HCT116 (cell line): ENCODE measurements at regions of chr1 and their contacts with region 1.

Region 1: DNA sequence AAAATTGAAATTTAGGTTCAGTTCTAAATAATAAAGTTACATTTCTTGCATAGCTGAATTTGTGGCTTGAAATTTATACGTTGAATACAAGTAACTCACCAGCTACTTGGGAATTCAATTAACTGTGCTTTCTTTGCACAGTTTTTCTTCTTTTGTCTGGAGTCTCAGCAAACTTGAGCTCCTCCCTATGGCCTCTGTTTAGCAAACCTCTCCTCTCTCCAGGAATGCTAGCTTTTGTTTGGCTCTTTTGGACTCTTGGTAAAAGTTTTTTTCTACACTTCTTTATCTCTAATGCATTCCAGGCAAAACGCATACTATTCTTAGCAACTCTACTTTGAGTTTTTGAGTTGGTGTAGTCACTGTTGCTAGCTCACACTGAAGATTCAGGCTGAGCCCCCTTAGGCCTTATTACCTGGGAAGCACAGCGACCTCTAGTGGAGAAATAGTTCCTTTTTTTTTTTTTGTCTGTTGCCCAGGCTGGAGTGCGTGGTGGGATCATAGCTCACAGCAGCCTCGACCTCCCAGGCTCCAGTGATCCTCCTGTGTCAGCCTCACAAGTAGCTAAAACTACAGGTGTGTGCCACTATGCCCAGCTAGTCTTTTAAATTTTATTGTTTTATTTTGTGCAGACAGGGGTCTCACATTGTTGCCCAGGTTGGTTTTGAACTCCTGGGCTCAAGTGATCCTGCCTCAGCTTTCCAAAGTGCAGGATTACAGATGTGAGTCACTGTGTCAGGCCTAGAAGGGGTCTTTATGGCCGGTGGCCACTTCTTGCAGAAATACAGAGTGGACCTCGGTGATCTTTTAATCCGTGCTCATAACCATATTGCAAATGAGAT is 61.7 kb downstream of the CASQ2 start:
- DNase-seq: peak; percentile 51
- ATAC-seq: peak; percentile 87
- H3K4me3 ChIP-seq: no peak overlapping the region
- H3K27ac ChIP-seq: no peak overlapping the region
- H3K4me1 ChIP-seq: no peaks in the 10 kb centered on the region
- H3K27me3 ChIP-seq: no peaks in the 10 kb centered on the region; the same call in 1 of the 2 replicates
- CTCF ChIP-seq: peak; percentile 60 to 86 (median 64); a peak in 5 of 6 replicates
- POLR2A ChIP-seq: no peak
- RAD21 ChIP-seq: peak; percentile 65

Region 2: GRCh38 chr1:115609021-115609420 is 97.8 kb before region 1 on chr1:
- CTCF ChIA-PET with region 1: interaction called, 30 read pairs
- POLR2A ChIA-PET with region 1: no interaction called
- RAD21 ChIA-PET with region 1: interaction called, 10 to 12 read pairs
- intact Hi-C with region 1: loop called (anchors 1 kb)
- DNase-seq: no peak
- ATAC-seq: no peak
- H3K4me3 ChIP-seq: no peak overlapping the region
- H3K27ac ChIP-seq: no peak overlapping the region
- H3K4me1 ChIP-seq: no peaks in the 10 kb centered on the region; a peak in 1 of 4 replicates
- H3K27me3 ChIP-seq: no peaks in the 10 kb centered on the region
- CTCF ChIP-seq: no peak
- POLR2A ChIP-seq: no peak
- RAD21 ChIP-seq: no peak

Region 3: DNA sequence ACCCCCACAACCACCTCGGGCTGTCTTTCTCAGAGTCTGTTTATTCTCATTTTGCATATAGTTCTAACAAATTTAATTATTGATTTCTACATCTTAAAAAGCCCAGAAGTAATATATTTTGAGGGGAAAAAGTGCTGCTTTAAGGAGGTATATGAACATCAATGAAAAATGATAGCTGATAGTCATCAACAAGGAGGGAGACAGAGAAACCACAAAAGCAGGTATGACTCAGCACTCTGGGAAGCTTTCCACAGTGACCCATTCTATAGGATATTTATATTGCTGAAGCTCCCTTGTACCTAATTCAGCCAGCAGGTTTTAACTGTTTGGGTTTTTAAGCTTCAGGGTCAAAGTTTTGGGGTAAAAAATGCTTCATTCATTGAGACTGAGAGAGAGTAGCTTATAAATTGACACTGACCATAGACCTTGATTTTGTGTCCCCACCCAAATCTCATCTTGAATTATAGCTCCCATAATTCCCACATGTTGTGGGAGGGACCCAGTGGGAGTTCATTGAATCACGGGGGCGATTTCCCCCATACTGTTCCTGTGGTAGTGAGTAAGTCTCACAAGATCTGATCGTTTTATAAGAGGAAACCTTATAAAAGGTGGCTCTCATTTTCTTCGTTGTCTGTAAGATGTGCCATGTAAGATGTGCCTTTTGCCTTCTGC is 37.7 kb before region 1 on chr1:
- CTCF ChIA-PET with region 1: interaction called, 32 read pairs
- POLR2A ChIA-PET with region 1: no interaction called
- RAD21 ChIA-PET with region 1: interaction called in 1 of 2 experiments, 5 read pairs
- intact Hi-C with region 1: no loop called
- DNase-seq: peak; percentile 69
- ATAC-seq: peak; percentile 59
- H3K4me3 ChIP-seq: peak overlapping the region in 1 of 2 experiments; percentile 36; a peak in 3 of 4 replicates
- H3K27ac ChIP-seq: peak overlapping the region; percentile 81
- H3K4me1 ChIP-seq: peaks cover 66 to 86% of the 10 kb centered on the region in 2 experiments
- H3K27me3 ChIP-seq: no peaks in the 10 kb centered on the region
- CTCF ChIP-seq: no peak
- POLR2A ChIP-seq: no peak
- RAD21 ChIP-seq: no peak

Region 4: GRCh38 chr1:115725600-115725999 is 18.8 kb after region 1 on chr1:
- CTCF ChIA-PET with region 1: interaction called, 11 read pairs
- POLR2A ChIA-PET with region 1: no interaction called
- RAD21 ChIA-PET with region 1: no interaction called
- intact Hi-C with region 1: no loop called
- DNase-seq: no peak
- ATAC-seq: no peak
- H3K4me3 ChIP-seq: no peak overlapping the region
- H3K27ac ChIP-seq: no peak overlapping the region
- H3K4me1 ChIP-seq: no peaks in the 10 kb centered on the region
- H3K27me3 ChIP-seq: no peaks in the 10 kb centered on the region
- CTCF ChIP-seq: no peak
- POLR2A ChIP-seq: no peak
- RAD21 ChIP-seq: no peak

Region 5: DNA sequence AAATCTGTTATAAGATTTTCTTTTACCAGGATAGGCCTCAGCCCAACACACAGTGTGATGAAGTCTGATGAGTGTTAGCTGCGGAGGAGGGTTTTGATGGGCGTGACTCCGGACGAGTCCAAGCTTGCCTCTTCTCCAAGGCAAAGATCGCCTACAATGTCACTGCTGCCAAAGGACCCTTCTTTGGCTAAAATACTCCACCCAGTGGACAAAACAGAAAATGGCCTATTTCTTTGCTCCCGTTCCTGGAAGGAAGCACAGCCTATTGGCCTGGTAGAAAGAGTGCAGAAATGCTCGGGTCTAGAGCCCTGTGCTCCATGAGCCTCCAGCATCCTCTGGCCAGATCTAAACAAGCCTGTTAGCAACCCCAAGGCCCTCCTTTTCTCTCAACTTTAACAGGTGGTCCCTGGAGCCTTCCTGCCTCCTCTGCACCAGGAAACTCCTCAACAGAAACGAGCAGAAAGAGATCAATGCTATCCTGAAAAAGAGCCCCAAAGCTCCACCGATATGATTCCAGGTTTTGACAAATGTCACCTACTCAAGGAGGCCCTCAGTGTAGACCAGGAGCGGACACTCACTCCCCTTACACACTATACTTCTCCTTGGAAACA is 65.1 kb after region 1 on chr1:
- CTCF ChIA-PET with region 1: interaction called, 16 read pairs
- POLR2A ChIA-PET with region 1: no interaction called
- RAD21 ChIA-PET with region 1: no interaction called
- intact Hi-C with region 1: no loop called
- DNase-seq: peak; percentile 82
- ATAC-seq: peak; percentile 96
- H3K4me3 ChIP-seq: peak overlapping the region; percentile 12 to 29; a peak in 2 of 4 replicates
- H3K27ac ChIP-seq: peak overlapping the region; percentile 38; the same call in 1 of the 2 replicates
- H3K4me1 ChIP-seq: peaks cover 5 to 13% of the 10 kb centered on the region in 2 experiments; a peak in 3 of 4 replicates
- H3K27me3 ChIP-seq: no peaks in the 10 kb centered on the region
- CTCF ChIP-seq: peak; percentile 74 to 80 (median 79)
- POLR2A ChIP-seq: no peak
- RAD21 ChIP-seq: peak; percentile 92